ENCODE measurements at regions of chr11 and their contacts with region 1.

Region 1: DNA sequence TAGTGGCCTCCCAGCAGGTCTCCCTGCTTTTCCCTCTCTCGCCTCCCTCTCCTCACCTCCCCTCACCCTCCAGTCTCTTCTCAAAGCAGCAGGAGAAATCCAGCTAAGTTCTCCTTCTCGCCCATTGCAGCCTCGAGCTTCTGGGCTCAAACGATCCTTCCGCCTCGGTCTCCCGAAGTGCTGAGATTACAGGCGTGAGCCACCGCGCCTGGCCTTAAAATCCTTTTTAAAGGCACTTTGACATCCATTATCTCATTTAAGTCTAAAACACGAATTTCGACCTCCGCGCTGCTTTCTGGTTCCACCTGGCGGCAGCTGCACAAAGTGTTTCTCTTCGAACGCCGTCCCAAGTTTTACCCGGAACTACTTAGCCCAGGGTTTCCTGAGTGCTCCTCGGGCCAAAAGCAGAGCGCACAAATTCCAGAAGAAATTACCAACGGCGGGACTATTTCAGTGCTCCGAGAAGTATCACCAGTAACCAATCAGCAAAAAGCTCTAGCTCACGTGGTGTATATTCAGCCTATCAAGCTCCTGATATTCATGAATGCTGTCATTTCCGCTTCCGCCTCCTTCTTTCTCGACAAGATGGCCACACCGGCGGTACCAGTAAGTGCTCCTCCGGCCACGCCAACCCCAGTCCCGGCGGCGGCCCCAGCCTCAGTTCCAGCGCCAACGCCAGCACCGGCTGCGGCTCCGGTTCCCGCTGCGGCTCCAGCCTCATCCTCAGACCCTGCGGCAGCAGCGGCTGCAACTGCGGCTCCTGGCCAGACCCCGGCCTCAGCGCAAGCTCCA is at the start of gene EIF3F:
- DNase-seq: peak; percentile 77 to 96
- H3K4me3 ChIP-seq: peak within 1 kb of the TSS; percentile 70 to 90
- H3K27ac ChIP-seq: peak within 1 kb of the TSS; percentile 76 to 81
- H3K4me1 ChIP-seq: peaks cover 8 to 27% of the 10 kb centered on the region in 2 donors
- H3K27me3 ChIP-seq: no peaks in the 10 kb centered on the region
- CTCF ChIP-seq: peak; percentile 81 to 89 (median 85)
- total RNA-seq, gene EIF3F: 319 TPM

Region 2: GRCh38 chr11:6603287-6604080 is 1383.5 kb before region 1 on chr11 and contains the starts of genes ILK and RRP8:
- intact Hi-C with region 1: loop called (anchors 10 kb)
- DNase-seq: peak; percentile 59 to 95
- H3K4me3 ChIP-seq: peak within 1 kb of the TSS; percentile 64 to 92
- H3K27ac ChIP-seq: peak within 1 kb of the TSS; percentile 95 to 97
- H3K4me1 ChIP-seq: peaks cover 25 to 34% of the 10 kb centered on the region in 2 donors
- H3K27me3 ChIP-seq: no peaks in the 10 kb centered on the region
- CTCF ChIP-seq: peak in 1 of 3 experiments; percentile 40
- total RNA-seq, gene ILK: 183 TPM
- total RNA-seq, gene RRP8: 9.2 TPM

Region 3: DNA sequence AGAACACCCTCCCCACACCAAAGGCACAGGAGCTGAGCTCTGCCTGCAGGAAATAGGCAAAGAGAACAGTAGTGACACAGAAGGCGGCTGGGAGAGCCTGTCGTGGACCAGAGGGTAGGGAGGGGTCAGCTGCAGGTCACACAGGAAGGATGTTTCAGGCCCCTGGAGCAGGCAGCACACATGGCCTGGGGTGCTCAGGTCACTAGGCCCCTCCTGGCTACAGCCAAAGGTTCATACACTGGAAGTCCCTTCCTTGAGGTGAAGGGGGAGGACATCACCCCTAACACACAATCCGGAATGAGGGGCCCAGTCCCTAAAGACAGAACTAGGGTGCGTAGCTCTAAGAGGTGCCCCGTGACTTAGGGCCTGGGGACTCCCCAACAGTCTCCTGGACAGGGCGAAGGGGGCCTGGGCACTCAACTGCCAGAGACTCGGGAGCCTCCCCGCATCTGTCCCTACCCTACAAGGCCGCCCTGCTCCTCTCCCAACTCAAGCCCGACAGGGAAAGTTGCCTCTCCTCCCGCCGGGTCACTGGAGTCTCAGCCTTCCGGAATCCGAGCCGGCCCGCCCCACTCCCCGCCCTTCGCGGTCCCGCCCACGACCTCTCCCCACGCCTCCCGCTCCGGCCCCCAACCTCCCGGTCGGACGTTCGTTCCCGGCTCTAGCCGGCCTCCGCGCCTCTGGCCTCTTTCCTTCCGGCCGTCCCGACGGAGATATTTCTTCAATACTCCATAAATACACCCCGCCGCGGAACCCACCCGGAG is 313.8 kb before region 1 on chr11 and contains the start of gene CYB5R2:
- intact Hi-C with region 1: loop called (anchors 5 kb)
- DNase-seq: peak in 1 of 2 donors; percentile 83
- H3K4me3 ChIP-seq: peak within 1 kb of the TSS; percentile 62 to 80
- H3K27ac ChIP-seq: peak within 1 kb of the TSS; percentile 49 to 60
- H3K4me1 ChIP-seq: peaks cover 0 to 9% of the 10 kb centered on the region in 2 donors
- H3K27me3 ChIP-seq: no peaks in the 10 kb centered on the region
- CTCF ChIP-seq: no peak
- total RNA-seq, gene CYB5R2: 35.8 TPM

Region 4: GRCh38 chr11:7892840-7893254 is 94.1 kb before region 1 on chr11:
- intact Hi-C with region 1: loop called (anchors 1 kb)
- DNase-seq: no peak
- H3K4me3 ChIP-seq: no peak overlapping the region
- H3K27ac ChIP-seq: no peak overlapping the region
- H3K4me1 ChIP-seq: no peaks in the 10 kb centered on the region
- H3K27me3 ChIP-seq: no peaks in the 10 kb centered on the region
- CTCF ChIP-seq: peak; percentile 35 to 77 (median 75)

Region 5: GRCh38 chr11:7904914-7905313 is 82.0 kb before region 1 on chr11:
- intact Hi-C with region 1: loop called (anchors 1 kb)
- DNase-seq: no peak
- H3K4me3 ChIP-seq: peak overlapping the region in 1 of 2 donors; percentile 25
- H3K27ac ChIP-seq: peak overlapping the region; percentile 56 to 60
- H3K4me1 ChIP-seq: peaks cover 5 to 12% of the 10 kb centered on the region in 2 donors
- H3K27me3 ChIP-seq: no peaks in the 10 kb centered on the region
- CTCF ChIP-seq: peak in 2 of 3 experiments; percentile 43 to 44